ENCODE measurements at regions of chr11 and their contacts with region 1.

Region 1: DNA sequence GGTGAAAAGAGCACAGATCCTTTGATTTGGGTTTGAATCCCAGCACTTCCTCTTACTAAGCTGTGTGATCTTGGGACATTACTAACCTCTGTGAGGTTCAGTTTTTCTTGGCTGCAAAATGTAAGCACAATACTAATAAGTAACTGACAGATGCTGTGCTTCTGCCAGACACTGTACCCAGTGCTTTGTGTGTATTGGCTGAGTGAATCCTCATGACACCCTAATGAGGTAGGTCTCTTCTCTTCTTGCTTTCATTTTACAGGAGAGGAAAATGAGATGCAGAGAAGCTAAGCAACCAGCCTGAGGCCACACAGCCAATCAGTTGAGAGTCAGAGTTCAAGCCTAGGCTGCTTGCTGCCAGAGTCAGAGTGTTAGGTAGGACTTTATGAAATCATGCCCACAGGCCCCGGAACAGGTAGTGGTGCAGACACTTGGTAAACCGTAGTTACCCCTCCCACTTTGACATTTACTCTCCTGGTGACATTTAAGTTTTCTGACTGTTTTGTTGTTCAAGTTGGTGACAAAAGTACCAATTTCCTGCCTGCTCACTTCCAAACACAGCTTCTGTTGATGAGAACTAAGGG is 21.2 kb downstream of the PTPRJ start:
- DNase-seq: peak; percentile 66 to 98 (median 82)
- ATAC-seq: peak; percentile 89
- H3K4me3 ChIP-seq: peak overlapping the region in 1 of 2 experiments; percentile 13
- H3K4me3 Mint-ChIP-seq: peak overlapping the region; percentile 35
- H3K27ac ChIP-seq: peak overlapping the region; percentile 62 to 73
- H3K27ac Mint-ChIP-seq: peak overlapping the region; percentile 93
- H3K4me1 ChIP-seq: peaks cover 82% of the 10 kb centered on the region
- H3K4me1 Mint-ChIP-seq: peaks cover 78% of the 10 kb centered on the region
- H3K27me3 ChIP-seq: no peaks in the 10 kb centered on the region
- H3K27me3 Mint-ChIP-seq: no peaks in the 10 kb centered on the region
- CTCF ChIP-seq: no peak

Region 2: GRCh38 chr11:47847892-47848635 is 153.5 kb before region 1 on chr11 and contains the start of gene NUP160:
- CTCF ChIA-PET with region 1: interaction called, 3 read pairs
- POLR2A ChIA-PET with region 1: no interaction called
- intact Hi-C with region 1: loop called in 1 of 2 experiments (anchors 5 kb)
- DNase-seq: peak; percentile 70 to 92 (median 88)
- ATAC-seq: peak; percentile 87
- H3K4me3 ChIP-seq: peak within 1 kb of the TSS; percentile 89 to 99
- H3K4me3 Mint-ChIP-seq: peak within 1 kb of the TSS; percentile 100
- H3K27ac ChIP-seq: peak within 1 kb of the TSS; percentile 88 to 95
- H3K27ac Mint-ChIP-seq: peak within 1 kb of the TSS; percentile 99
- H3K4me1 ChIP-seq: peaks cover 35% of the 10 kb centered on the region
- H3K4me1 Mint-ChIP-seq: peaks cover 45% of the 10 kb centered on the region
- H3K27me3 ChIP-seq: no peaks in the 10 kb centered on the region
- H3K27me3 Mint-ChIP-seq: no peaks in the 10 kb centered on the region
- CTCF ChIP-seq: no peak
- total RNA-seq, gene NUP160: 38.6 to 46.6 TPM

Region 3: DNA sequence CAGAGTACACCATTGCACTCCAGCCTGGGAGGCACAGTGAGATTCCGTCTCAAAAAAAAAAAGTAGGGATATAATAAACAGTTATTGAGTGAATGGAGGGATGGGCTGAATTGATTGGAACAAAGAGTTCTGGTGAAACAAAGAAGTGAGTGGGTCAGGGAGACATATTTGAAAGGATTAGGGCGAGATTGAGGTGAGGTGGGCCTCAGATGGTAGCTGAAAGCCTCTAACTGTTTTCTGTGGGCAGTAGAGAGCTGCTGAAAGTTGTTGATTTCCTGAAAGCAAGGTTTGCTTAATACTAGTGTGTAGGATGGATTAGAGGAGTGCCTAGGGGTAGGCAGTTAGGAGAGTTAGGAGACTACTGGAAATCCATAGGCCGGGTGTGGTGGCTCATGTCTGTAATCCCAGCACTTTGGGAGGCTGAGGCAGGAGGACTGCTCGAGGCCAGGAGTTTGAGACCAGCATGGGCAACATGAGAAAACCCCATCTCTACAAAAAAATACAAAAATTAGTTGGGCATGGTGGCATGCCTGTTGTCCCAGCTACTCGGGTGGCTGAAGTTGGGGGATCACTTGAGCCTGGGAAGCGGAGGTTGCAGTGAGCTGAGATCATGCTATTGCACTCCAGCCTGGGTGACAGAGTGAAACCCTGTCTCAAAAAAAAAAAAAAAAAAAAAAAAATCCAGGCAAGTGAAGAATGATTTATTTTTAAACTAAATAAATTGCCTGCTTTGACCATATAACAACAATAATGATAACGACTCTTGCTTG is 62.6 kb before region 1 on chr11:
- CTCF ChIA-PET with region 1: interaction called, 11 read pairs
- POLR2A ChIA-PET with region 1: no interaction called
- intact Hi-C with region 1: loop called in 1 of 2 experiments (anchors 5 kb)
- DNase-seq: no peak
- ATAC-seq: no peak
- H3K4me3 ChIP-seq: no peak overlapping the region
- H3K4me3 Mint-ChIP-seq: no peak overlapping the region
- H3K27ac ChIP-seq: no peak overlapping the region
- H3K27ac Mint-ChIP-seq: no peak overlapping the region
- H3K4me1 ChIP-seq: peaks cover 6% of the 10 kb centered on the region
- H3K4me1 Mint-ChIP-seq: peaks cover 13% of the 10 kb centered on the region
- H3K27me3 ChIP-seq: no peaks in the 10 kb centered on the region
- H3K27me3 Mint-ChIP-seq: no peaks in the 10 kb centered on the region
- CTCF ChIP-seq: no peak

Region 4: GRCh38 chr11:47980245-47981049 is 21.1 kb before region 1 on chr11 and contains the start of gene PTPRJ:
- CTCF ChIA-PET with region 1: interaction called, 3 read pairs
- POLR2A ChIA-PET with region 1: interaction called, 9 read pairs
- intact Hi-C with region 1: loop called (anchors 1 to 2 kb)
- DNase-seq: peak in 8 of 9 experiments; percentile 39 to 85 (median 63)
- ATAC-seq: peak; percentile 70
- H3K4me3 ChIP-seq: peak within 1 kb of the TSS; percentile 43 to 65
- H3K4me3 Mint-ChIP-seq: peak within 1 kb of the TSS; percentile 93
- H3K27ac ChIP-seq: peak within 1 kb of the TSS; percentile 19 to 40
- H3K27ac Mint-ChIP-seq: peak within 1 kb of the TSS; percentile 52
- H3K4me1 ChIP-seq: peaks cover 30% of the 10 kb centered on the region
- H3K4me1 Mint-ChIP-seq: peaks cover 36% of the 10 kb centered on the region
- H3K27me3 ChIP-seq: no peaks in the 10 kb centered on the region
- H3K27me3 Mint-ChIP-seq: no peaks in the 10 kb centered on the region
- CTCF ChIP-seq: no peak
- total RNA-seq, gene PTPRJ: 26.9 to 31.4 TPM

Region 5: GRCh38 chr11:48020092-48020755 is 18.7 kb after region 1 on chr11:
- CTCF ChIA-PET with region 1: interaction called, 12 read pairs
- POLR2A ChIA-PET with region 1: interaction called, 47 read pairs
- intact Hi-C with region 1: loop called in 1 of 2 experiments (anchors 2 kb)
- DNase-seq: peak in 2 of 9 experiments; percentile 75 to 83
- ATAC-seq: peak; percentile 32
- H3K4me3 ChIP-seq: no peak overlapping the region
- H3K4me3 Mint-ChIP-seq: peak overlapping the region; percentile 22
- H3K27ac ChIP-seq: peak overlapping the region in 1 of 2 experiments; percentile 91
- H3K27ac Mint-ChIP-seq: peak overlapping the region; percentile 80
- H3K4me1 ChIP-seq: peaks cover 50% of the 10 kb centered on the region
- H3K4me1 Mint-ChIP-seq: peaks cover 62% of the 10 kb centered on the region
- H3K27me3 ChIP-seq: no peaks in the 10 kb centered on the region
- H3K27me3 Mint-ChIP-seq: no peaks in the 10 kb centered on the region
- CTCF ChIP-seq: no peak

Region 6: GRCh38 chr11:48150213-48150612 is 148.7 kb after region 1 on chr11:
- CTCF ChIA-PET with region 1: no interaction called
- POLR2A ChIA-PET with region 1: no interaction called
- intact Hi-C with region 1: no loop called
- DNase-seq: no peak
- ATAC-seq: no peak
- H3K4me3 ChIP-seq: no peak overlapping the region
- H3K4me3 Mint-ChIP-seq: no peak overlapping the region
- H3K27ac ChIP-seq: no peak overlapping the region
- H3K27ac Mint-ChIP-seq: no peak overlapping the region
- H3K4me1 ChIP-seq: no peaks in the 10 kb centered on the region
- H3K4me1 Mint-ChIP-seq: peaks cover 2% of the 10 kb centered on the region
- H3K27me3 ChIP-seq: no peaks in the 10 kb centered on the region
- H3K27me3 Mint-ChIP-seq: no peaks in the 10 kb centered on the region
- CTCF ChIP-seq: no peak

Measured in CD8-positive, alpha-beta T cell (primary cell).